ENCODE measurements at regions of chr12 and their contacts with region 1.

Region 1: DNA sequence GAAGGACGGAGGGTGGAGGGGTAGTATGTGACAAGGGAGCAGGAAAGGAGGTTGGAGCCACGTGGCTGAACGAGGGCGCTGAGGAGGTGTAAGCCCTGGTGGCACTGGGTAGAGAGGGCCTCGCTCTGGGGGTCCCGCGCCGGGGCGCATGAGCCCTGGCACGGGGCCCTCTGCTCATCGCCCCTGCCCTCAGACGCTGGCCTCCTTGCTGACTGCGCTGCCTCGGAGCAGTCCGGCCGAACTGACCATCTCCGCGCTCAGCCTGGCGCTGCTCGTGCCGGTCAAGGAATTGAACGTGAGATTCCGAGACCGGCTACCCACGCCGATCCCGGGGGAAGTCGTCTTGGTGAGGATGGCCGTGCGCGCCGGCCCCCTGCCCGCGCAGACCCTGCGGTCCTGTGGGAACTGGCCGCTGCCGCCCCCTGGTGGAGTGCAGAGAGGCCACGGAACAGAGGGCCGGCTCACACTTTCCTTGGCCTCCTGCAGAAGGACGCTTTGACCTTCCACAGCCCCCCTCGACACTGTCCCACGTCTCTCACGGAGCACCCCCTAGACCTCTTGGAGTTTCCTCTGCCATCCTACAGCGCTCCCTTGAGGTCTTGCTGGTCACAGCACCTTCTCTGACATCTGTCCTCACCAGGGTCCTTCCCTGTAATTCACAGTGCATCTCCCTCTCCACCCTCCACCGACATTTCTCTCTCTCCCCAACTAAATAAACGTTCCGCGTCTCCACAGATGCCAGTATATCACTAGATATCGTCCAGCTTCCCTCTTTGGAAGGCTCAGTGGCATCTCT is 10.5 kb downstream of the ARHGEF25 start:
- DNase-seq: peak; percentile 88
- H3K4me3 ChIP-seq: peak overlapping the region; percentile 5 to 67 (median 36)
- H3K27ac ChIP-seq: no peak overlapping the region
- H3K4me1 ChIP-seq: peaks cover 18 to 35% (median 28%) of the 10 kb centered on the region in 6 donors
- H3K27me3 ChIP-seq: peaks cover 7 to 100% (median 76%) of the 10 kb centered on the region in 7 donors
- CTCF ChIP-seq: peak; percentile 40 to 92 (median 86)
- POLR2A ChIP-seq: no peak

Region 2: GRCh38 chr12:57583008-57583831 is 38.5 kb before region 1 on chr12:
- intact Hi-C with region 1: loop called (anchors 5 kb)
- DNase-seq: no peak
- H3K4me3 ChIP-seq: no peak overlapping the region
- H3K27ac ChIP-seq: no peak overlapping the region
- H3K4me1 ChIP-seq: peaks cover 0 to 13% (median 3%) of the 10 kb centered on the region in 6 donors
- H3K27me3 ChIP-seq: peaks cover 0 to 46% (median 0%) of the 10 kb centered on the region in 7 donors
- CTCF ChIP-seq: peak; percentile 94 to 97 (median 95)
- POLR2A ChIP-seq: no peak

Measured in spleen (tissue), 13 donors.